Activated B cell treated with CpG ODN at 0.5 μM for 24 hours (primary cell): ENCODE measurements at regions of chr17 and their contacts with region 1.

Region 1: DNA sequence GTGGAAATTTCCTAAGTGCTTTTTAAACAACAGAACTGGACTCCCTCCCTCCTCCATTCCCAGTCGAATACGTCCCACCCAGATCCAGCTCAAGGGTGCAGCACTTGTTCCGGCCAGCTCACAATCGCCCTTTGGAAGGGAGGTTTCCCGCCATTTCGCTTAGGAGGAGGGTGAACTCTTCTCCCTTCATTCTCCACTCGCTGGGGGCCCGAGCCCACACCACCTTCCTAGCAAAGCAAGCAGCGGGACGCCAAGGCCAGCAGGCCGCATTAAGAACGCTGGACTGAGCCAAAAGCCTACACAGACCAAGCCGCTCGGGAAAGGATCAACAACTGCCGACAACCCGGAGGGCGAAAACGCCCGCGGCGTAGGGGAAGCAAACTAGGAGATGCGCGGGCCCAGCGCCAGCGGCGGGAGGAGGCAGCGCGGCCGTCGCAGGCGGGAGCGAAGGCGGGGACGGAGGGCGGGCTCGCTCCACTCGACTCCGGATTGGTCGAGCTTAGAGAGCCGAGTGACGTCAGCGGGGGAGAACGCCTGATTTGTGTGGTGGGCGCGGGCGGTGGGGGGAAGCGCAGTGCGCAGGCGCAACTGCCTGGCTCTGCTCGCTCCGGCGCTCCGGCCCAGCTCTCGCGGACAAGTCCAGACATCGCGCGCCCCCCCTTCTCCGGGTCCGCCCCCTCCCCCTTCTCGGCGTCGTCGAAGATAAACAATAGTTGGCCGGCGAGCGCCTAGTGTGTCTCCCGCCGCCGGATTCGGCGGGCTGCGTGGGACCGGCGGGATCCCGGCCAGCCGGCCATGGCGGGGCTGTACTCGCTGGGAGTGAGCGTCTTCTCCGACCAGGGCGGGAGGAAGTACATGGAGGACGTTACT is at the start of gene PPM1D:
- DNase-seq: peak; percentile 96
- ATAC-seq: peak; percentile 93
- H3K4me3 Mint-ChIP-seq: peak within 1 kb of the TSS; percentile 98
- H3K27ac Mint-ChIP-seq: peak within 1 kb of the TSS; percentile 96
- H3K4me1 Mint-ChIP-seq: peaks cover 48% of the 10 kb centered on the region
- H3K27me3 Mint-ChIP-seq: no peaks in the 10 kb centered on the region
- CTCF ChIP-seq: no peak
- total RNA-seq, gene PPM1D: 12.9 and 13.3 TPM in 2 replicates

Region 2: GRCh38 chr17:60392042-60392844 is 207.6 kb before region 1 on chr17 and contains the start of gene USP32:
- CTCF ChIA-PET with region 1: no interaction called
- POLR2A ChIA-PET with region 1: interaction called, 12 read pairs
- intact Hi-C with region 1: no loop called
- DNase-seq: peak; percentile 94
- ATAC-seq: peak; percentile 88
- H3K4me3 Mint-ChIP-seq: peak within 1 kb of the TSS; percentile 97
- H3K27ac Mint-ChIP-seq: peak within 1 kb of the TSS; percentile 96
- H3K4me1 Mint-ChIP-seq: peaks cover 66% of the 10 kb centered on the region
- H3K27me3 Mint-ChIP-seq: no peaks in the 10 kb centered on the region
- CTCF ChIP-seq: no peak
- total RNA-seq, gene USP32: 48.9 and 59.2 TPM in 2 replicates

Region 3: DNA sequence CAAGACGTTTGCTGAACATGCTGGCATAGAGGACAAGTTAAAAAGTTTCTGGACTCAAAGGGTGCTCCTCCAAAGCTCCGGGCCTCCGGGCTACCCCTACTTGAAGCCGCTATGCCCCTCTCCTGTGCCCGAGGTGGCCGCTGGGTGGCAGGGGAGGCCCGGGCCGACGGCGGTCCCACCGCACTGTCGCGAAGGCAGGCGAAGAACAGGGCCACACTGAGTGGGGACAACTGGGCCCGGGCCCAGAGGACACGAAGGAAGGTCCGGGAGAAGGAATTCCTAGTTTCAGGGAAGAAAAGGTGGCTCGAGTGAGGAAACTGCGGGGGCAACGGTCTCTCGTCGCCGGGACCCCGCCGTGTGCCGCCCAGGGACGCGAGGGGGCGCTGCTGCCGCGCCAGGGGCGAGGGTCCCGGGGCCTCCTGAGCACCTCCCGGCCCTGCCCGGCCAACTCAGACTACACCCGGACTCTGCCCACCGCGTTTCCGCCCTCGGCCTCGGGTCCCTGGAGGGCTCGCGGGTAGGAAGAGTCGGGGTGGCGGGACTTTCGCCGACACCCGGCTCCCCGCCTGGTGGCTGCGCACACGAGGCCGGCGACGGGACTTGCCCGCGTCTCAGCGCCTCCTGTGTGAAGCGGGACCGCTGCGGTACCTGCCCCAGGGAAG is 178.5 kb before region 1 on chr17:
- CTCF ChIA-PET with region 1: no interaction called
- POLR2A ChIA-PET with region 1: no interaction called
- intact Hi-C with region 1: loop called (anchors 1 kb)
- DNase-seq: peak; percentile 79
- ATAC-seq: peak; percentile 93
- H3K4me3 Mint-ChIP-seq: peak overlapping the region; percentile 85
- H3K27ac Mint-ChIP-seq: peak overlapping the region; percentile 74
- H3K4me1 Mint-ChIP-seq: peaks cover 8% of the 10 kb centered on the region
- H3K27me3 Mint-ChIP-seq: no peaks in the 10 kb centered on the region
- CTCF ChIP-seq: peak; percentile 100

Region 4: DNA sequence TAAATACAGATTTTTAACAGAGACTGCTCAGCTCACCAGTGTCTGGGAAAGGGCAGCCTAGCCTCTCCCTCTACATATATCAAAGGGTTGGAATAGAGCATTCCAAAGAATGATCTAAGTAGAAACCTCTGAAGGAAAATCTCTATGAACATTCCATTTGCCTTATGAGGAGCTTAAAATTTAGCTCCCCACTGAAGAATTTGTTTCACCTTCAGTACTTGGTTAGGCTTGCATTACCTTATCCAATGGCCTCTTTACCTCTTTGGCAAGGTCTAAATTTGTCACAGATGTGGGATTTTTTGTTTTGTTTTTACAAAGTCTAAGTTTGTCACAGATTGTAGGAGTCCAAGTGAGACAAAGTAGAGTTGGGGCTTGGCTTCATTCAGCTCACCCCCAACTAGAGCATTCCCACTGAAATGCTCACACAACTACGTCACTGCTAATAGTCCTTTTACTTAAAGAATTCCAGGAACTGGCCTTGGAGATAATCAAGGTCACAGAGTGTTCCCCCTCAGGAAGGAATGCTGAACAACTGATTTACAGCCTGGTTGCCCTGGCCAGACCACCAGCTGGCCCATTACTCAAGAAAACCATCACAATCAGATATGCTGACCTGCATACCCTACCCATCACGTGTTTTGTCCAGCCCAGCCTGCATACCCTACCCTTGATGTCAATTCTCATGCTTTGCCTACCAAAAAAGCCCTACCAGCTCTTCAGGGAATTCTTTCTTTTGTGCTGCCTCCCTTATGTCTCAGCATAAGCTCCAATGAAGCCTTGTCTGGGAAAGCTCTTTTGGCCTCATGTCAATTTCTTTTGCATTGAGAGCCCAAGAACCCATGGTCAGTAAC is 26.4 kb before region 1 on chr17:
- CTCF ChIA-PET with region 1: interaction called, 6 read pairs
- POLR2A ChIA-PET with region 1: interaction called, 7 read pairs
- intact Hi-C with region 1: loop called (anchors 5 kb)
- DNase-seq: no peak
- ATAC-seq: no peak
- H3K4me3 Mint-ChIP-seq: no peak overlapping the region
- H3K27ac Mint-ChIP-seq: no peak overlapping the region
- H3K4me1 Mint-ChIP-seq: peaks cover 6% of the 10 kb centered on the region
- H3K27me3 Mint-ChIP-seq: peaks cover 2% of the 10 kb centered on the region
- CTCF ChIP-seq: no peak

Region 5: DNA sequence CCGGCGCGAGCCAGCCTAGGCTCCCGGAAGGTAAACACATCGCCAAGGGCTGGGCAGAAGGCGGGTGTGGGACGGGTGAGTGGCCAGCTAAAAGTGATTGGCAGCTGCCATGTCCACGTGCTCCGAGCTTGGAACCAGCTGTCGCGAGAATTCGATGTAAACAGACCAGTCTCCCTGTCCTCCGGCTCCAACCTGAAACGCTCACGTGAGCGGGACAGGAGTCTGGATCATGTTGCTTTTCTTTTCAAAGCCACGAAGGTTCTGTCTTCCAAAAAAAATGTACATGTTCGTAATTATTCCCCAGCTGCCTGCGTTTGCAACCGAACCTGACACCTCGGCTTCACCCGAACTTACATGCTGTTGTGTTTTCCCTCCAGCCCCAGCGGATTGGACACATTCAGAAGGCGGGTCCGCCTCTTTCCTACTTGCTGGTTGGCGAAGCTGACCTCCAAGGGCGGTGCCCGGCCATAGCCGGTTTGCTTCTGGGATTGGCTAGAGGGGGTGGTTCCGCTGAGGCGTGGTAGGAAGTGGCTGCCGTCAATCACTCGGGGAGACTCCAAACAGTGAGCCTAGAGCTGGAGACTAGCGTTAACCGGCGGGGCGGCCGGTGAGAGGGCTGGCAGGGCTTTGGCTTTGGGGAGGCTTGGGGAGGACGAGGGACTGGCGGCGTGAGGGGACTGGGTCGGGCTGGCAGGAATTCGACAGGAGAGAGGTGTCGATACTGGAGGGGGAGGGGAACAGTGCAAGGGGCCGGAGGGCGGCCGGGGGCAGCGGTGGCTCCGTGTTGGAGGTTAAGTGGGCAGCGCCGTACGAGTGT is 77.7 kb after region 1 on chr17 and contains the start of gene BCAS3:
- CTCF ChIA-PET with region 1: no interaction called
- POLR2A ChIA-PET with region 1: interaction called, 17 read pairs
- intact Hi-C with region 1: loop called (anchors 1 kb)
- DNase-seq: peak; percentile 84
- ATAC-seq: peak; percentile 95
- H3K4me3 Mint-ChIP-seq: peak within 1 kb of the TSS; percentile 99
- H3K27ac Mint-ChIP-seq: peak within 1 kb of the TSS; percentile 94
- H3K4me1 Mint-ChIP-seq: peaks cover 23% of the 10 kb centered on the region
- H3K27me3 Mint-ChIP-seq: no peaks in the 10 kb centered on the region
- CTCF ChIP-seq: no peak
- total RNA-seq, gene BCAS3: 25.8 and 37.5 TPM in 2 replicates